Naive thymus-derived CD8-positive, alpha-beta T cell (primary cell): ENCODE measurements at regions of chr11 and their contacts with region 1.

Region 1: DNA sequence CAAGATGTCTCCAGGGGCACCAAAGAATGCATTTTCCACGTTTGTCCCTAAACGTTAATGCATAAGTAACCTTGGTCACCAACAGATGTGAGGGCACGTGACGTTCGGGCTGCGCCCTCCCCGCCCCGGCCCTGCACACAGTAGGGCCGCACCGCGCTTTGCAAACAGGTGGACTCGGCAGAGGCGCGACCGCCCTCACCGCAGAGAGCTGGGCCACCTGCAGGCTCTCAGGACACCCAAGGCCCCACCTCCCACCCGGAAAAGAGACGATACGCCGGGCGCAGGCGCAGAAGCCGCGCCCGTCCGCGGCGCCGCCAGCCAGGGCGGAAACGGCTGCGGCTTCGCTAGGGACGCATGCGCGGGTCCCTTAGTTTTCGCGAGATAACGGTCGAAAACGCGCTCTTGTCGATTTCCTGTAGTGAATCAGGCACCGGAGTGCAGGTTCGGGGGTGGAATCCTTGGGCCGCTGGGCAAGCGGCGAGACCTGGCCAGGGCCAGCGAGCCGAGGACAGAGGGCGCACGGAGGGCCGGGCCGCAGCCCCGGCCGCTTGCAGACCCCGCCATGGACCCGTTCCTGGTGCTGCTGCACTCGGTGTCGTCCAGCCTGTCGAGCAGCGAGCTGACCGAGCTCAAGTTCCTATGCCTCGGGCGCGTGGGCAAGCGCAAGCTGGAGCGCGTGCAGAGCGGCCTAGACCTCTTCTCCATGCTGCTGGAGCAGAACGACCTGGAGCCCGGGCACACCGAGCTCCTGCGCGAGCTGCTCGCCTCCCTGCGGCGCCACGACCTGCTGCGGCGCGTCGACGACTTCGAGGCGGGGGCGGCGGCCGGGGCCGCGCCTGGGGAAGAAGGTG is at the start of gene FADD:
- DNase-seq: peak; percentile 84 to 95 (median 90)
- ATAC-seq: peak; percentile 73 to 76
- H3K4me3 Mint-ChIP-seq: peak within 1 kb of the TSS; percentile 91 to 98 (median 96)
- H3K27ac Mint-ChIP-seq: peak within 1 kb of the TSS; percentile 90 to 98 (median 97)
- H3K4me1 Mint-ChIP-seq: peaks cover 13 to 47% (median 42%) of the 10 kb centered on the region in 4 donors
- H3K27me3 Mint-ChIP-seq: peaks cover 0 to 1% (median 0%) of the 10 kb centered on the region in 5 donors
- polyA plus RNA-seq, gene FADD: 7.2 to 19.3 (median 8.4) TPM

Region 2: DNA sequence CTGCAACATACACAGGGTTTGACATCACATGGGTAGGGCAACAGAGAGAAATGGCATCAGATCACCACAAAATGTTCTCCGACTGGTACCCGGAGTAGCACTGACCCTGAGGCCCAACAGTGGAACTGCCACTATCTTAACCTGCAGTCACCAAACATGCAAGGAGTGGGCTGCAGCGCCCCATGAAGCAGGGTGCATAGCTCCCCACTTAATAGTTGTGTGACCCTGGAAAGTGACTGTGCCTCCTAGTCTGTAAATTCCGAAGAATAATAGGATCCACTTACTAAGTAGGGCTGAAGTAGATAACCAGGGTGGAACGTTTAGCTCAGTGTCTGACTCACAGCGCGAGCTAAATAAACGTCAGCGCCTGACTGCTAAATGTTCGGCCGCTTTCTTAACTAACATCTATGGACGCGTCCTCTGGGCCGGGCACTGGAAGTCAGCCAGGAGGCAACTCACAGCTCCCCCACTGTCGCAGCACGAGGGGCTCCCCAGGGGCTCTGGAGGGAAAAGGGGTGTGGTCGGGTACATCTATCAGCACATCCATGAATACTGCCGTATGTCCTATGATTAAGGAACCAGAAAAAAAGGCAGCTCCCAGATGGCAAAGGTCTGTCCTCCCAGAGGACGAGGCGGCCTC is 528.7 kb before region 1 on chr11:
- POLR2A ChIA-PET with region 1: interaction called, 12 read pairs
- DNase-seq: peak in 1 of 10 donors; percentile 9
- ATAC-seq: no peak
- H3K4me3 Mint-ChIP-seq: peak overlapping the region; percentile 92 to 97 (median 96)
- H3K27ac Mint-ChIP-seq: peak overlapping the region; percentile 72 to 97 (median 94)
- H3K4me1 Mint-ChIP-seq: peaks cover 17 to 40% (median 35%) of the 10 kb centered on the region in 4 donors
- H3K27me3 Mint-ChIP-seq: no peaks in the 10 kb centered on the region

Region 3: GRCh38 chr11:70158201-70158600 is 44.9 kb before region 1 on chr11:
- POLR2A ChIA-PET with region 1: no interaction called
- DNase-seq: no peak
- ATAC-seq: no peak
- H3K4me3 Mint-ChIP-seq: no peak overlapping the region
- H3K27ac Mint-ChIP-seq: no peak overlapping the region
- H3K4me1 Mint-ChIP-seq: no peaks in the 10 kb centered on the region
- H3K27me3 Mint-ChIP-seq: peaks cover 0 to 6% (median 0%) of the 10 kb centered on the region in 5 donors

Region 4: GRCh38 chr11:70270104-70270876 is 67.2 kb after region 1 on chr11 and contains the start of gene PPFIA1:
- POLR2A ChIA-PET with region 1: interaction called, 16 read pairs
- DNase-seq: peak; percentile 92 to 97 (median 96)
- ATAC-seq: peak; percentile 85 to 89
- H3K4me3 Mint-ChIP-seq: peak within 1 kb of the TSS; percentile 86 to 93 (median 92)
- H3K27ac Mint-ChIP-seq: peak within 1 kb of the TSS; percentile 75 to 90 (median 86)
- H3K4me1 Mint-ChIP-seq: peaks cover 11 to 45% (median 40%) of the 10 kb centered on the region in 4 donors
- H3K27me3 Mint-ChIP-seq: peaks cover under 1 to 17% (median 7%) of the 10 kb centered on the region in 5 donors
- polyA plus RNA-seq, gene PPFIA1: 6.8 to 15.0 (median 10.3) TPM